Natural killer cell (primary cell): ENCODE measurements at regions of chr6 and their contacts with region 1.

Region 1: DNA sequence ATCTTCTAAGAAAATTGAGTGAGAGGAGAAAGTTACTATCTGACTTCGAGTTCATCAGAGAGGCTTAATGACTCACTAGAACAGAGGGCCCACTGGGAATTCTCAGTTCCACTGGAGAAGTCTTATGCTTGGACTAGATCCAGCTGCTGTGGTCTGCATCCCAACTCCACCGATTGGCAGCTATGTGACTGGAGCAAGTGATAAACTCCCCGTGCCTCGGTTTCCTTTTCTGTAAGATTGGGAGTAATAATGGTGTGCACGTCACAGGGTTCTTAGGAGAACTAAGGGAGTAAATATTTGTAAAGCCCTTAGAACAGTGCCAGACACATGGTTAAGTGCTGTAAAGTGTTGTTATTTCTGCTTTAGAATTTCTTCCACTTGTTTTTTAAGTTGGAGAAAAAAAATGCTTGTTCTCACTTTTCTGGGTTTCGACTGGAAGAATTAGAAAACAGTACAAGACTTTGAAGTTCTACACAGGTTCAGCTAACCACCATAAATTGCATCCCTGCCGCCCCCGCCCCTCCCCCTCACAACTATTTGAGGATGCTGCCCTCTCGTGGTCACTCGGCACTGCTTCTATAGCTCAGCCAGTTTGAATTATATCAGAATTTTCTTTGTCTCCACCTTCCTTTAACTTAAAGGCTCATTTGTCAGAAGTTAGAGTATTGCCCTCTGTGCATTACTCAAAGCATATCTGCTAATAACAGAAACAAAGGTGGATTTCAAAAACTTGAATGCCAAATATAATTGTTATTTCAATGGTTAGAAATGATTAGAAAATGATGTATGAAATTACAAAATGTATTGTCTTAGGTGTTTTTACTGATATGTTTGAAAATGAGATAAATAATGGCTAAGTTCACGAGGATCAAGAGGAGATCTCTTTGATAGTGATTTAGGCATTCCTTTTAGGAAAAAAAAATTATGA is 95.0 kb upstream of the IFNGR1 start:
- DNase-seq: peak; percentile 44 to 87
- ATAC-seq: peak; percentile 81 to 88 (median 81)
- H3K4me3 ChIP-seq: no peak overlapping the region
- H3K4me3 Mint-ChIP-seq: no peak overlapping the region
- H3K27ac ChIP-seq: no peak overlapping the region
- H3K27ac Mint-ChIP-seq: no peak overlapping the region
- H3K4me1 ChIP-seq: peaks cover 9% of the 10 kb centered on the region
- H3K4me1 Mint-ChIP-seq: peaks cover 6 to 9% of the 10 kb centered on the region in 2 donors
- H3K27me3 ChIP-seq: no peaks in the 10 kb centered on the region
- H3K27me3 Mint-ChIP-seq: peaks cover 0 to 4% of the 10 kb centered on the region in 2 donors
- CTCF ChIP-seq: peak; percentile 82

Region 2: GRCh38 chr6:136967876-136968752 is 346.1 kb before region 1 on chr6:
- intact Hi-C with region 1: loop called (anchors 5 kb)
- DNase-seq: peak; percentile 44 to 77
- ATAC-seq: peak; percentile 82 to 99 (median 95)
- H3K4me3 ChIP-seq: no peak overlapping the region
- H3K4me3 Mint-ChIP-seq: no peak overlapping the region
- H3K27ac ChIP-seq: no peak overlapping the region
- H3K27ac Mint-ChIP-seq: no peak overlapping the region
- H3K4me1 ChIP-seq: peaks cover 5% of the 10 kb centered on the region
- H3K4me1 Mint-ChIP-seq: peaks cover 0 to 10% of the 10 kb centered on the region in 2 donors
- H3K27me3 ChIP-seq: peaks cover 9% of the 10 kb centered on the region
- H3K27me3 Mint-ChIP-seq: peaks cover 35 to 57% of the 10 kb centered on the region in 2 donors
- CTCF ChIP-seq: peak; percentile 56

Region 3: GRCh38 chr6:137076277-137077068 is 237.7 kb before region 1 on chr6:
- intact Hi-C with region 1: loop called (anchors 1 kb)
- DNase-seq: peak; percentile 42 to 73
- ATAC-seq: peak; percentile 90 to 100 (median 95)
- H3K4me3 ChIP-seq: no peak overlapping the region
- H3K4me3 Mint-ChIP-seq: no peak overlapping the region
- H3K27ac ChIP-seq: no peak overlapping the region
- H3K27ac Mint-ChIP-seq: no peak overlapping the region
- H3K4me1 ChIP-seq: no peaks in the 10 kb centered on the region
- H3K4me1 Mint-ChIP-seq: no peaks in the 10 kb centered on the region
- H3K27me3 ChIP-seq: peaks cover 4% of the 10 kb centered on the region
- H3K27me3 Mint-ChIP-seq: peaks cover 52% of the 10 kb centered on the region in 2 donors
- CTCF ChIP-seq: peak; percentile 71